CD8-positive, alpha-beta T cell (primary cell): ENCODE measurements at regions of chr6 and their contacts with region 1.

Region 1: GRCh38 chr6:2853761-2854395 is 12.2 kb upstream of the SERPINB1 start:
- DNase-seq: peak in 7 of 9 experiments; percentile 44 to 91 (median 76)
- ATAC-seq: peak; percentile 46
- H3K4me3 ChIP-seq: peak overlapping the region; percentile 43 to 47
- H3K4me3 Mint-ChIP-seq: peak overlapping the region; percentile 77
- H3K27ac ChIP-seq: peak overlapping the region; percentile 49 to 97
- H3K27ac Mint-ChIP-seq: peak overlapping the region; percentile 93
- H3K4me1 ChIP-seq: peaks cover 60% of the 10 kb centered on the region
- H3K4me1 Mint-ChIP-seq: peaks cover 65% of the 10 kb centered on the region
- H3K27me3 ChIP-seq: no peaks in the 10 kb centered on the region
- H3K27me3 Mint-ChIP-seq: no peaks in the 10 kb centered on the region
- CTCF ChIP-seq: peak; percentile 52

Region 2: GRCh38 chr6:2870056-2870674 is 16.3 kb after region 1 on chr6:
- CTCF ChIA-PET with region 1: interaction called, 7 read pairs
- POLR2A ChIA-PET with region 1: interaction called, 10 read pairs
- intact Hi-C with region 1: loop called in 1 of 2 experiments (anchors 1 kb)
- DNase-seq: no peak
- ATAC-seq: no peak
- H3K4me3 ChIP-seq: no peak overlapping the region
- H3K4me3 Mint-ChIP-seq: no peak overlapping the region
- H3K27ac ChIP-seq: no peak overlapping the region
- H3K27ac Mint-ChIP-seq: no peak overlapping the region
- H3K4me1 ChIP-seq: peaks cover 25% of the 10 kb centered on the region
- H3K4me1 Mint-ChIP-seq: peaks cover 47% of the 10 kb centered on the region
- H3K27me3 ChIP-seq: no peaks in the 10 kb centered on the region
- H3K27me3 Mint-ChIP-seq: no peaks in the 10 kb centered on the region
- CTCF ChIP-seq: no peak

Region 3: GRCh38 chr6:2876210-2877056 is 22.6 kb after region 1 on chr6:
- CTCF ChIA-PET with region 1: interaction called, 6 read pairs
- POLR2A ChIA-PET with region 1: interaction called, 14 read pairs
- intact Hi-C with region 1: loop called in 1 of 2 experiments (anchors 2 kb)
- DNase-seq: peak in 3 of 9 experiments; percentile 38 to 67 (median 57)
- ATAC-seq: peak; percentile 9
- H3K4me3 ChIP-seq: peak overlapping the region; percentile 33 to 65
- H3K4me3 Mint-ChIP-seq: peak overlapping the region; percentile 87
- H3K27ac ChIP-seq: peak overlapping the region; percentile 24 to 77
- H3K27ac Mint-ChIP-seq: peak overlapping the region; percentile 93
- H3K4me1 ChIP-seq: peaks cover 68% of the 10 kb centered on the region
- H3K4me1 Mint-ChIP-seq: peaks cover 78% of the 10 kb centered on the region
- H3K27me3 ChIP-seq: no peaks in the 10 kb centered on the region
- H3K27me3 Mint-ChIP-seq: no peaks in the 10 kb centered on the region
- CTCF ChIP-seq: no peak

Region 4: GRCh38 chr6:2891768-2892170 is 37.9 kb after region 1 on chr6:
- CTCF ChIA-PET with region 1: interaction called, 9 read pairs
- POLR2A ChIA-PET with region 1: interaction called, 5 read pairs
- intact Hi-C with region 1: loop called in 1 of 2 experiments (anchors 5 kb)
- DNase-seq: peak; percentile 35 to 89 (median 68)
- ATAC-seq: peak; percentile 94
- H3K4me3 ChIP-seq: peak overlapping the region in 1 of 2 experiments; percentile 9
- H3K4me3 Mint-ChIP-seq: peak overlapping the region; percentile 69
- H3K27ac ChIP-seq: peak overlapping the region; percentile 17 to 51
- H3K27ac Mint-ChIP-seq: peak overlapping the region; percentile 94
- H3K4me1 ChIP-seq: peaks cover 29% of the 10 kb centered on the region
- H3K4me1 Mint-ChIP-seq: peaks cover 67% of the 10 kb centered on the region
- H3K27me3 ChIP-seq: no peaks in the 10 kb centered on the region
- H3K27me3 Mint-ChIP-seq: no peaks in the 10 kb centered on the region
- CTCF ChIP-seq: no peak

Region 5: GRCh38 chr6:2900821-2901644 is 47.2 kb after region 1 on chr6:
- CTCF ChIA-PET with region 1: interaction called, 6 read pairs
- POLR2A ChIA-PET with region 1: interaction called, 8 read pairs
- intact Hi-C with region 1: loop called in 1 of 2 experiments (anchors 2 kb)
- DNase-seq: peak in 1 of 9 experiments; percentile 46
- ATAC-seq: no peak
- H3K4me3 ChIP-seq: peak overlapping the region; percentile 73 to 90
- H3K4me3 Mint-ChIP-seq: peak overlapping the region; percentile 99
- H3K27ac ChIP-seq: peak overlapping the region; percentile 67 to 82
- H3K27ac Mint-ChIP-seq: peak overlapping the region; percentile 96
- H3K4me1 ChIP-seq: peaks cover 37% of the 10 kb centered on the region
- H3K4me1 Mint-ChIP-seq: peaks cover 60% of the 10 kb centered on the region
- H3K27me3 ChIP-seq: no peaks in the 10 kb centered on the region
- H3K27me3 Mint-ChIP-seq: no peaks in the 10 kb centered on the region
- CTCF ChIP-seq: no peak

Region 6: DNA sequence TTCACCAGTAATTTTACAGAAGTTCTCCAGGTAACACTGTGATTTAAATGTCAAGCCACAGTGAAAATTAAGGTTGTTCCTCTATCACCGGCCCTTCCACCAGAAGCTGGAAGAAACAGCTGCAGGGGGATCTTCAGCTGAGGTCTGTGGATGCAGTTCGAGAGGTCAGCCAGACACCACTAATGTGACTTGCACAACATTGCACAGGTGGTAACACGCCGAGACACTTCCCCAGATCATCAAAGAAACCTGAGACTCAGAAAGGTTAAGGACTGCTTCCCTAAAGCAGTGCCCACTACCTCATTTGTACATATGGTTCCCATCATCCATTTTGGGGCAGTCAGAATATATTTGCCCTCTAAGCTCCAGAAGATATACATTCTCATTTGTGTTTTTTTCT is 57.3 kb after region 1 on chr6:
- CTCF ChIA-PET with region 1: interaction called, 202 read pairs
- POLR2A ChIA-PET with region 1: interaction called, 5 read pairs
- intact Hi-C with region 1: no loop called
- DNase-seq: no peak
- ATAC-seq: no peak
- H3K4me3 ChIP-seq: no peak overlapping the region
- H3K4me3 Mint-ChIP-seq: no peak overlapping the region
- H3K27ac ChIP-seq: no peak overlapping the region
- H3K27ac Mint-ChIP-seq: no peak overlapping the region
- H3K4me1 ChIP-seq: no peaks in the 10 kb centered on the region
- H3K4me1 Mint-ChIP-seq: peaks cover 33% of the 10 kb centered on the region
- H3K27me3 ChIP-seq: no peaks in the 10 kb centered on the region
- H3K27me3 Mint-ChIP-seq: no peaks in the 10 kb centered on the region
- CTCF ChIP-seq: no peak

Region 7: GRCh38 chr6:2940010-2940850 is 86.4 kb after region 1 on chr6:
- CTCF ChIA-PET with region 1: interaction called, 306 read pairs
- POLR2A ChIA-PET with region 1: interaction called, 10 read pairs
- intact Hi-C with region 1: loop called in 1 of 2 experiments (anchors 2 kb)
- DNase-seq: peak; percentile 52 to 91 (median 73)
- ATAC-seq: peak; percentile 70
- H3K4me3 ChIP-seq: peak overlapping the region; percentile 52 to 75
- H3K4me3 Mint-ChIP-seq: peak overlapping the region; percentile 84
- H3K27ac ChIP-seq: peak overlapping the region; percentile 73 to 84
- H3K27ac Mint-ChIP-seq: peak overlapping the region; percentile 94
- H3K4me1 ChIP-seq: peaks cover 87% of the 10 kb centered on the region
- H3K4me1 Mint-ChIP-seq: peaks cover 80% of the 10 kb centered on the region
- H3K27me3 ChIP-seq: no peaks in the 10 kb centered on the region
- H3K27me3 Mint-ChIP-seq: no peaks in the 10 kb centered on the region
- CTCF ChIP-seq: no peak